Activated CD4-positive, alpha-beta memory T cell treated with anti-CD3 and anti-CD28 coated beads for 36 hours (primary cell): ENCODE measurements at regions of chr1 and their contacts with region 1.

Region 1: DNA sequence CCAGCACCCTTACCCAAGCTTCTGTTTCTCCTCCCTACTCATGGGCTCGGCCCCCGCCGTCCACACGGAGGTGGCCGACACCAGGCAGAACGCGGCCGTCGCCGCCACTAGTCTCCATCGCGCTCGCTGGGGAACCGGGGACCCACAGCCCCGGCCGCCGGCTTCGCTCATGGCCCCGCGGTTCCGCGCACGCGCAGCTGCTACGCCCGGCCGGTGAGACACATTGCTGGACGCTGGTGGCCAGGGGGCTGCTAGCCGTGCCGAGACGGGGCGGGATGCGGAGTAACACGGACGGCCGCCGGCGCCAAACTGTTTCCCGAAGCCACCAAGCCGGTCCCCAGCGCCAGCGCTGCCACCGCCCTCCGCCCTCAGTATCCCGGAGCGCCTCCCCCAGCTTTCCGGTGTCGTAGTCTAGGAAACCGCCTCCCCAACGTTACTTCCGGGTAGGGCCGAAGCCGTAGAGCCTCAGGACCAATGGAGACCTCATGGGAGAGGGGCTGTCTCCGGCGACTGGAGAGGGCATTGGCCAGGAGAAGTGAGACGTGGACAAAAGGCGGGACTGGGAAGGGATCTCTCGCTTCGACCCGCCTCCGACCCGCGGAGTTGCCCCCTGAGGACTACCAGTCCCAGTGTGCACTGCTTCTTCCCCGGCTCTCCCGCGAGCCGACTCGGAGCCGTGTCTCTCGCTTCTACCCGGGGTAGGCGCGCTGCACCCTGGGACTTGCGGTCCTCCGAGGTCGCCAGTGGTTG is at the start of gene EDEM3:
- DNase-seq: peak; percentile 99
- H3K4me3 Mint-ChIP-seq: peak within 1 kb of the TSS; percentile 93
- H3K27ac Mint-ChIP-seq: peak within 1 kb of the TSS; percentile 93
- H3K4me1 Mint-ChIP-seq: peaks cover 38% of the 10 kb centered on the region
- H3K27me3 Mint-ChIP-seq: peaks cover 2% of the 10 kb centered on the region
- total RNA-seq, gene EDEM3: 14.5 to 15.2 TPM

Region 2: DNA sequence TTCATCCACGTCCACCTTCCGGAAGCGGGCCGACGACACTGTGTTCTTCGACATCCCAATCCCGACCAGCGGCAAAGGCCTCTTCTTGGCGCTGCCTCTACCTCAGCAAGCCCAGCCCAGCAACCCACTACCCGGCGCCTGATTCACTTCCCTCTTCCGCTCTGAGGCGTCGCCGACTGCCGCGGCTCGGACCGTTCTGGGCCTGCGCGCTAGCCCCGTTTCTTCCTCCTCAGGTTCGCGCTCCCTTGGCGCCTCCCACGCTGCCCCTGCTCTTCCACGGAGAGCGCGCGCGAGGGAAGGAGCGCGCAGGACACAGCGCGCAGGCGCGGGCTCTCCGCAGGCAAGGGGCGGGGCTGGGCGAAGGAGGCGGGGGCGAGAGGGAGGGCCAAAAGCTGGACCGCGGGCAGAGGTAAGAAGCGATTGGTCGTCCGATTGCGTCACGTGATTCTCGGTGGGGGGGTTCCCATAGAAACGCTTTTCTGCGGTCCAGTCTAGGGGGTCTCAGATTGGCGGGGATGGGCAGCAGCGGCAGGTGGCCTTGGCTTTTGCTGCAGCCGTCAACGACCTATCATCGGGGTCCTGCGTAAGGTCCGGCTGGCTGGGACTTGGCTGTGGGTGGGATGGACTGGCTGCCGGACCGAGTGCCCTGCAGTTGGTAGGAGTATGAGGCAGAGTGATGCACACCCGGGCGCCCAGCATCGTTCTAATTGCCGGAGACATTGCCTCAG is 1118.9 kb before region 1 on chr1 and contains the start of gene ARPC5:
- CTCF ChIA-PET with region 1: no interaction called
- POLR2A ChIA-PET with region 1: no interaction called
- intact Hi-C with region 1: loop called (anchors 10 kb)
- DNase-seq: peak; percentile 98
- H3K4me3 Mint-ChIP-seq: peak within 1 kb of the TSS; percentile 95
- H3K27ac Mint-ChIP-seq: peak within 1 kb of the TSS; percentile 99
- H3K4me1 Mint-ChIP-seq: peaks cover 33% of the 10 kb centered on the region
- H3K27me3 Mint-ChIP-seq: no peaks in the 10 kb centered on the region
- total RNA-seq, gene ARPC5: 158 to 161 TPM

Region 3: GRCh38 chr1:184743062-184743756 is 11.4 kb before region 1 on chr1:
- CTCF ChIA-PET with region 1: interaction called, 4 read pairs
- POLR2A ChIA-PET with region 1: interaction called, 15 read pairs
- intact Hi-C with region 1: loop called (anchors 1 kb)
- DNase-seq: no peak
- H3K4me3 Mint-ChIP-seq: no peak overlapping the region
- H3K27ac Mint-ChIP-seq: peak overlapping the region; percentile 74
- H3K4me1 Mint-ChIP-seq: peaks cover 60% of the 10 kb centered on the region
- H3K27me3 Mint-ChIP-seq: no peaks in the 10 kb centered on the region

Region 4: DNA sequence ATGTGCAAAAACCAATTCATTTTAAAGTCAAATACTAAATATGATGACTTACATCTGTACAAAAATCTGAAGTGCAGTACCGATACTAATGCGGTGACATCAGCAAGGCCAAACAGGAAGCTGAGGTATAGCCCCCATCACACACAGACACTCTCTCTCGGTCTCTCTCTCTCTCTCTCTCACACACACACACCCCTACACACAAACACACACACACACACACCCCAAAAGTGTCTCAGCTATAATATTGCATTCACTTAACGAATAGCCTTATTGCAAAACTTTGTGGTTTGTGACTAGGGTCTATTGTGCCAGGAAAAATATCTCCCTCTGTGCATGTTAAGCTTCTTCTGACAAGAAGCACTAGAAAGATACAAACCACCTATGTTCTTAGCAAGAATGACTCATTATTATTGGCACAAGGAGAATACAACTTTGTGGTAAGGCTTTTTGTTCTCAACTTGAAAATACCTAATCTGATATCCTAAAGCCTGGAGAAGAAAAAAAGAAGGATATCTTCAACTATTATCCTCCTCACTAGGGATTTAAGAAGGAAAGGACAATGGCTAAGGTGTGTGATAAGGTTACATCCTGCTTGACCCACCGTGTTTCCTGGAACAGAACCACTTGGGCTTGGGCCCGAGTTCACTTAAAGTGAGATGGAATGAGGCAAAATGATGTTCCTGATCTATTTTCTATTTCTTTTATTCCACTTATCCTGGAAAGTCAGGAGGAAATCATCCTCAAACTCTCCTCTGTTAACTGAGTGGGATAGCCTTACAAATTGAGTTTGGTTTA is 112.5 kb after region 1 on chr1:
- CTCF ChIA-PET with region 1: no interaction called
- POLR2A ChIA-PET with region 1: interaction called, 3 read pairs
- intact Hi-C with region 1: loop called (anchors 2 kb)
- DNase-seq: peak; percentile 79
- H3K4me3 Mint-ChIP-seq: peak overlapping the region; percentile 54
- H3K27ac Mint-ChIP-seq: peak overlapping the region; percentile 85
- H3K4me1 Mint-ChIP-seq: peaks cover 52% of the 10 kb centered on the region
- H3K27me3 Mint-ChIP-seq: no peaks in the 10 kb centered on the region

Region 5: GRCh38 chr1:184973272-184974055 is 218.8 kb after region 1 on chr1:
- CTCF ChIA-PET with region 1: interaction called, 5 read pairs
- POLR2A ChIA-PET with region 1: interaction called, 34 read pairs
- intact Hi-C with region 1: loop called (anchors 1 kb)
- DNase-seq: peak; percentile 86
- H3K4me3 Mint-ChIP-seq: peak overlapping the region; percentile 94
- H3K27ac Mint-ChIP-seq: peak overlapping the region; percentile 96
- H3K4me1 Mint-ChIP-seq: peaks cover 53% of the 10 kb centered on the region
- H3K27me3 Mint-ChIP-seq: peaks cover 6% of the 10 kb centered on the region

Region 6: GRCh38 chr1:185156854-185157598 is 402.4 kb after region 1 on chr1 and contains the starts of genes SWT1 and TRMT1L:
- CTCF ChIA-PET with region 1: no interaction called
- POLR2A ChIA-PET with region 1: interaction called, 4 read pairs
- intact Hi-C with region 1: loop called (anchors 1 kb)
- DNase-seq: peak; percentile 99
- H3K4me3 Mint-ChIP-seq: peak within 1 kb of the TSS; percentile 86
- H3K27ac Mint-ChIP-seq: peak within 1 kb of the TSS; percentile 90
- H3K4me1 Mint-ChIP-seq: peaks cover 53% of the 10 kb centered on the region
- H3K27me3 Mint-ChIP-seq: no peaks in the 10 kb centered on the region
- total RNA-seq, gene SWT1: 2.3 to 3.0 TPM
- total RNA-seq, gene TRMT1L: 28.6 to 34.4 TPM